ENCODE measurements at regions of chr2 and their contacts with region 1.

Region 1: DNA sequence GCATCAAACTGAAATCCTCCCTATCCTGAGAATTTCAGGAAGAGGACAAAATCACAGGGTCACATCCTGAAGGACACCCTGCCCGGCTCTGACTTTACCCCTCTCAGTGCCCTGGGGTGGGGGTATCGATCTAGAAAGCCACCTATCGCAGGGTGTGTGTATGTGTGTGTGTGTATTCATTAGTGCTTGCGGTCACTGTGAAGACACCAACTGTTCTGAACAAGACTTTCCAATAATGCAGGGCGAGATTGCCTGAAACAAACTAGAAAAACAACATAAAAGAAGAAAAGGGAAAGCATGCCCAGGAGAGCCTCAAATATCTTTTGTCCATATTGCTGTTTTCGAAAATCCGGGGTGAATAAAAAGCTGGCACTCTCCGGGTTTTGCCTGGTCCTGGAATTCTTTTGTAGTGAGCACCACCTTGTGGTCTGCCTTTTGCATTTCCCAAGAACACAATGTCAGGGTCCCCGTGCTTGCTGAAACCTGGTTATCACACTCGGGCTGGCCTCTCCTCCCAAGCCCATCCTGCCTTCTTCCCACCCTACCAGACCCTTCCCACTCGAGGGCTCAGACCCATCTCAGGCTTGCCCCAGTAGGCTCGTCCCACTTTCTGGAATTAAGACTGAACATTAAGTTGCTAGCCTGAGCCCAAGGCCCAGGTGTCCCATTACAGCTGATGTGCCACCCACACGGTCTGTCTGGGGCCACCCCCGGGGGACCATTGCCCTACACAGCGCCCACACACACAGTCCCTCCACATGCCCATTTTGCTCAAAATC is 25.0 kb upstream of the COPS8 start:
- DNase-seq: peak; percentile 43
- ATAC-seq: peak; percentile 75 to 78

Region 2: DNA sequence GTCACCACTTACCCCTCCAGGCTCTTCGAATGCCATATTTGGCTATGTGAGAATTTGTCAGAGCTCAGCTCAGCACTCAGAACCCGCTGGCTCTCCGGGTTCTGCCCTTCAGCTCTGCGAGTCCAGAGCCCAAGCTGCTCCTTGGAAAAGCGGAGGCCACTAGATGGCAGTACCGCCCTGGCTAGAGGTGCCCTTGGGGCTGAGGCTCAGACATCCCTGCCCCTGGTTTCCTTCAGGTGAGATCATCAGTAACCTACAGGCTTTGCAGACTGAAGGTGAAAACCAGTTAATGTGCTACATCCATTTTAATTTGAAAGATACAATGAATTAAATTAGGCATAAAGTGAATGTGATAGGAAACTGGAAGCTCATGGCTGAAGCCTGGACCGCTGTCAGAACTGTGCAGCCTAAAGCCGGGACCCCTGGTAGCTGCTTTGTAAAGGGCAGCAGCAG is 1281.3 kb before region 1 on chr2:
- intact Hi-C with region 1: loop called in 1 of 2 experiments (anchors 10 kb)
- DNase-seq: peak; percentile 76
- ATAC-seq: peak; percentile 89 to 92

Region 3: GRCh38 chr2:236352761-236353593 is 707.7 kb before region 1 on chr2:
- intact Hi-C with region 1: loop called (anchors 2 to 5 kb)
- DNase-seq: no peak
- ATAC-seq: no peak

Region 4: GRCh38 chr2:237113026-237113795 is 52.5 kb after region 1 on chr2:
- intact Hi-C with region 1: no loop called
- DNase-seq: no peak
- ATAC-seq: no peak